Uterus (tissue), 4 donors: ENCODE measurements at regions of chr22 and their contacts with region 1.

Region 1: GRCh38 chr22:17084554-17085276 is at the start of gene IL17RA:
- DNase-seq: peak; percentile 87 to 91
- H3K4me3 ChIP-seq: peak within 1 kb of the TSS; percentile 55 to 79
- H3K27ac ChIP-seq: peak within 1 kb of the TSS; percentile 70 to 86
- H3K4me1 ChIP-seq: peaks cover 0 to 9% of the 10 kb centered on the region in 2 donors
- H3K27me3 ChIP-seq: no peaks in the 10 kb centered on the region
- CTCF ChIP-seq: peak in 2 of 4 experiments; percentile 3
- POLR2A ChIP-seq: peak in 1 of 2 donors; percentile 78
- total RNA-seq, gene IL17RA: 2.6 to 19.3 (median 6.2) TPM

Region 2: GRCh38 chr22:16955678-16956210 is 129.0 kb before region 1 on chr22:
- intact Hi-C with region 1: no loop called
- DNase-seq: no peak
- H3K4me3 ChIP-seq: no peak overlapping the region
- H3K27ac ChIP-seq: no peak overlapping the region
- H3K4me1 ChIP-seq: no peaks in the 10 kb centered on the region
- H3K27me3 ChIP-seq: no peaks in the 10 kb centered on the region
- CTCF ChIP-seq: no peak
- POLR2A ChIP-seq: no peak

Region 3: DNA sequence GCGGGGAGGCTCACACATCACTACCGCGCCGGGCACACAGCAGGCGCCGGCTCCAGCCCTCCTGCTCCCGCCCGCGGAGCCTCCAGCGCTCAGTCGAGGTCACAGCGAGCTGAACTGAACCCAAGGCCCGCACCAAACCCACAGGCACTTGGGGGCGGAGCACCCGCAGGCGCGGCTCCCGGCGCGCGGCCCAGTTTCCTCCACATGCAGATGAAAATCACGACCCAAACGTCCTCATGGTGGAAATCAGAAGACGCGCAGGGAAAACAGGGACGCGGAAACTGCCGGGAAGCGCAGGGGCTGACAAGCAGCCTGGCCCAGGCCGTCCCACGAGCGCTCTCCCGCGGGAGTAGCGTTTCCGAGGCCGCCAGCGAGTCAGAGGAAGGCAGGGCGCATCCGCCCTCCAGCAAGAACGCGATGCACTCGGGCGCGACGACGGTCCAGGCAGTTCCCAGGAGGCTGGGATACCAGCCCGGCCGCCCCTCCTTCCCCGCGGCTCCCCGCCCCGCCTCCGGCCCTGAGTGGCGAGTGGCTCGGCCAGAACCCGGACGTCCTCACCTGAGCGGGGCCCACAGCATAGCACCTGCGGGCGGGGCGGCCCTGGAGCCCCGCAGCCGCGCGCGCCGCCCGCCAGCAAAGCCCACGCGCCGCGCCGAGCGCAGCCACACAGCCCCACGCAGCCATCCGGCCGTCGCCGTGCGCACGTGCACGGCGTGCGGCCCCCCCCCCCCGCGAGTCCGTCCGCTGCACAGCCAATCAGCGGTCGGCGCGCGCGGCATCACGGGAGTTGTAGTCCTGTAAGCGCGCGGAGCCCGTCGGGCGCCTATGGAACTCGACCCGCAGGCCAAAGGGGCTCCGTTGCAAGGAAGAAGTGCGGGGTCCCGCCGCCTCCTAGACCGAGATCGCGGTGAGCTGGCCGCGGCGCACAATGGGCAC is 74.1 kb after region 1 on chr22 and contains the start of gene HDHD5:
- intact Hi-C with region 1: loop called (anchors 10 kb)
- DNase-seq: peak; percentile 84 to 88
- H3K4me3 ChIP-seq: peak within 1 kb of the TSS; percentile 46 to 83
- H3K27ac ChIP-seq: peak within 1 kb of the TSS; percentile 72 to 89
- H3K4me1 ChIP-seq: no peaks in the 10 kb centered on the region
- H3K27me3 ChIP-seq: no peaks in the 10 kb centered on the region
- CTCF ChIP-seq: peak in 1 of 4 experiments; percentile 9
- POLR2A ChIP-seq: peak in 1 of 2 donors; percentile 50
- total RNA-seq, gene HDHD5: 7.4 to 43.0 (median 28.9) TPM